A673 (cell line): ENCODE measurements at regions of chr20 and their contacts with region 1.

Region 1: DNA sequence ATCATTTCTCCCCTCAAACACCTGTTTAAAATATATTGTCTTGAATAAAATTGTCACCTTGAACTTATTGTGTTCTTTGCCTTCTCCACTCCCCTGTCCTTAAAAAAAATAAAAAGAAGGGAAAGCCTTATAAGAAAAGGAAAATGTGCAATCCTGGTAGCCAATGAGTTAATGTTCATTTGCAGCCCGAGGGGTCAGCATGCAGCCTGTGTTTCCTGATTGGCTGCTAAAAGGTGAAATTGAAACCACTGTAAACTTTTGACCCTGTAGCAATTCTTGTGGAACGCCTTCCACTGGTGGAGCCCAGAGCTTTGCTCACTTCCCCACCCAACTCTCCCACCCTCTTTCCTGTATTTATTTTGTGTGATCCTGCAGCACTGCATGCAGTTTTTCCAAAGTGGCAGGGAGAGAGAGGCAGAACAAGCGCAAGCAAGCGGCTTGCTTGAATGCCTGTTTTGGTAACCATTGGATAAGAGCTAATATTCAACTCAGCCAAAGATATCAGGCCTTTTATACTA is 74.9 kb downstream of the NCOA3 start:
- DNase-seq: peak; percentile 78
- H3K4me3 ChIP-seq: peak overlapping the region; percentile 9
- H3K27ac ChIP-seq: peak overlapping the region; percentile 0
- H3K4me1 ChIP-seq: peaks cover 54% of the 10 kb centered on the region
- H3K27me3 ChIP-seq: no peaks in the 10 kb centered on the region
- CTCF ChIP-seq: no peak

Region 2: DNA sequence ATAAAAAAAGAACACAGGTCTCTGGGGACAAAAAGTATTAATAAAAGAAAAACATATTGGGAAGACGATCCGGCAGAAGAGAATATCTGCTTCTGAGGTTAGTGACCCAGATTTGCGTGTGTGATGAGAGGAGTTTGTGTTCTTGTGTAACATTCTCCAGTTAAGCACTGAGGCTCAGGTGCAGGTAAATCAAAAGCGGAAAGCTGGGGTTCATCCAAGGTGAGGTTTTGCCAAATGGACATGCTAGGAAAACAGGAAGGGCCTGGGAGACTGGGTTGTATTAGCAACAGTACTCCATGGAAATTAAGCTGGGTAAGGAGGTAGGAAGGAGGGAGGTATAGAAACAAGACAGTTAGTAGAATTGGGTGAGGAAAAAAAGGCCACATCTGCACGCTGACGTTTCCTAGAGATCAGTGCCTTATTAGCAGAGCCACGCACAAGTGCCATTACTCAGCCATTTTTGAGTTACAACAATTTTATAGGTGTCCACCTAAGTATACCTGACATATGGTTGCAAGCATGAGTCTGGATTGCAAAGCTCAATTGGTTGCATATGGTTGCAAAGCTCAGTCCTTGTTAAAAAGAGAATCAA is 359.7 kb before region 1 on chr20:
- CTCF ChIA-PET with region 1: no interaction called
- POLR2A ChIA-PET with region 1: no interaction called
- intact Hi-C with region 1: no loop called
- DNase-seq: no peak
- H3K4me3 ChIP-seq: no peak overlapping the region
- H3K27ac ChIP-seq: no peak overlapping the region
- H3K4me1 ChIP-seq: no peaks in the 10 kb centered on the region
- H3K27me3 ChIP-seq: no peaks in the 10 kb centered on the region
- CTCF ChIP-seq: no peak

Region 3: DNA sequence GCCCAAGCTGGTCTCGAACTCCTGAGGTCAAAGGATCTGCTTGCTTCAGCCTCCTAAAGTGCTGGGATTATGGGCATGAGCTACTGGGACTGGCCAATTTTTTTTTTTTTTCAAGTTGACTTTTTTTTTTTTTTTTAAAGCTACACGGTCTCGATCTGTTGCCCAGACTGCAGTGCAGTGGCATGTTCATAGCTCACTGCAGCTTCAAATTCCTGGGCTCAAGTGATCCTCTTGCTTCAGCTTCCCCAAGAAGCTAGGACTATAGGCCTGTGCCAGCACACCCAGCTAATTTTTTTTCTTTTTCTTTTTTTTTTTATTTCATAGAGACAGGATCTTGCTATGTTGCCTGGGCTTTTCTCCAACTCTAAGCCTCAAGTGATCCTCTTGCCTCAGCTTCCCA is 15.4 kb before region 1 on chr20:
- CTCF ChIA-PET with region 1: no interaction called
- POLR2A ChIA-PET with region 1: interaction called, 12 read pairs
- intact Hi-C with region 1: no loop called
- DNase-seq: no peak
- H3K4me3 ChIP-seq: no peak overlapping the region
- H3K27ac ChIP-seq: no peak overlapping the region
- H3K4me1 ChIP-seq: peaks cover 37% of the 10 kb centered on the region
- H3K27me3 ChIP-seq: no peaks in the 10 kb centered on the region
- CTCF ChIP-seq: no peak

Region 4: DNA sequence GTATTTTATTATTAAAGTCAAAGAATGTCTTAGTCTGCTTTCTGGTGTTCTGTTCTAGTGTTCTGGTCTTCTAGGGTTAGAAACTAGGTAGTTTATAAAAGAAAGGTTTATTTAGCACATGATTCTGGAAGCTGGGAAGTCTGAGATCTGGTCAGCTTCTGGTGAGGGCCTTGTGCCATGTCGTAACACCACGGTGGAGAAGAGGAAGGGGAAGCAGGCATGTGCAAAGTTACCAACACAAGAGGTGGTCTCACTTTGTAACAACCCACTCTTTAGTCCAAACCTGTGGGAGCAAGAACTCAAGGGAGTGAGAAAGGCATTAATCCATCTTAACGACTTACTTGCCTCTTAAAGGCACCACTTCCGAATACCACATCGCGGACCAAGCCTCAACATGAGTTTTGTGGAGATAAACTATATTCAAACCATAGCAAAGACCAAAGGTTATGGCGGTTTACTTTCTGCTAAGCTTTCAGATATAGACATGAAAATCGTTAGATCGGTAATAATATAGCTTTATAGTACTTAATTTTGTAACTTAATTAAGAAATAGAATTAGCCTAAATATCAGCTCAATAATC is 24.5 kb after region 1 on chr20:
- CTCF ChIA-PET with region 1: no interaction called
- POLR2A ChIA-PET with region 1: interaction called, 13 read pairs
- intact Hi-C with region 1: no loop called
- DNase-seq: no peak
- H3K4me3 ChIP-seq: no peak overlapping the region
- H3K27ac ChIP-seq: no peak overlapping the region
- H3K4me1 ChIP-seq: peaks cover 35% of the 10 kb centered on the region
- H3K27me3 ChIP-seq: no peaks in the 10 kb centered on the region
- CTCF ChIP-seq: no peak

Region 5: DNA sequence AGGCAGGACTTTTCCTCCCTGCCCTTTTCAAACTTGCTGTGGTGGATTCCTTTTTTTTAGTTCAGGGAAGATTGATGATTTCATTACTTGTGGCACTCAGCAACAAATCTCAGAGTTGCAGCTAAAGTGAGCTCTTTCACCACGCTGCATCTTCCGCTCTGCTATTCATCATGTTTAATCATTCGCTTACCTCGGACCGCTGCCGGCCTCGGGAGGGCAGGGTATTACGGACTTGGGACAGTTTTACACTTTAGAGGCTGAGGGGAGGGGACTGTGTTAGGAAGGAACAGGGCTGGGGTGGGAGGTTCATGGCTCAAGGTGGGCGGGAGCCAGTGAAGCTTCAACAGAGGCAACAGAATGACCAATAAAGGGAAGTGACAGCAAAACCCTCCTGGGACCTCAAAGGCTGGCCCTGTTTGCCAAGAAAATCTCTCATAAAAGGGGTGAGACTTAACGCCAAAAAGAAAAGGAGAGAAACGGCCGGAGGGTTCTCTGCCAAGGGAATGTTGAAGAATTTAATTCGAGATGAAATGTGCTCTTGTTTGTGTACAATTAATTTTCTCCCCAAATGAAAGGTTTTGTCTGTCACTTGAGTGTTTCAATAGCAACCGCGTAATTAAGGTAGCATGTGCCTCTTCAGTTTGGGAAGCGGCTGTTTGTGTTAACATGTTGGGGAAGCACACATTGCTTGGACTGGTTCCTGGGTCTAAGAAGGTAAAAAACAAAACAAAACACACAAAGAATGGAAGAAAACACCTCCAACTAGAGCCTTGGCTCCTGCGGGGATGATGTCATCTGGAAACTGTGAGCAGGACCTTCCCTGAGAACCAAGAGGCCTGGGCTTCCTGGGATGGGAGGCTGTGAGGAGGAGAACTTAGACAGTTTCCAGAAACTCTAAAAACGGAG is 281.2 kb after region 1 on chr20:
- CTCF ChIA-PET with region 1: no interaction called
- POLR2A ChIA-PET with region 1: no interaction called
- intact Hi-C with region 1: no loop called
- DNase-seq: no peak
- H3K4me3 ChIP-seq: no peak overlapping the region
- H3K27ac ChIP-seq: no peak overlapping the region
- H3K4me1 ChIP-seq: no peaks in the 10 kb centered on the region
- H3K27me3 ChIP-seq: peaks cover 7% of the 10 kb centered on the region
- CTCF ChIP-seq: no peak

Region 6: DNA sequence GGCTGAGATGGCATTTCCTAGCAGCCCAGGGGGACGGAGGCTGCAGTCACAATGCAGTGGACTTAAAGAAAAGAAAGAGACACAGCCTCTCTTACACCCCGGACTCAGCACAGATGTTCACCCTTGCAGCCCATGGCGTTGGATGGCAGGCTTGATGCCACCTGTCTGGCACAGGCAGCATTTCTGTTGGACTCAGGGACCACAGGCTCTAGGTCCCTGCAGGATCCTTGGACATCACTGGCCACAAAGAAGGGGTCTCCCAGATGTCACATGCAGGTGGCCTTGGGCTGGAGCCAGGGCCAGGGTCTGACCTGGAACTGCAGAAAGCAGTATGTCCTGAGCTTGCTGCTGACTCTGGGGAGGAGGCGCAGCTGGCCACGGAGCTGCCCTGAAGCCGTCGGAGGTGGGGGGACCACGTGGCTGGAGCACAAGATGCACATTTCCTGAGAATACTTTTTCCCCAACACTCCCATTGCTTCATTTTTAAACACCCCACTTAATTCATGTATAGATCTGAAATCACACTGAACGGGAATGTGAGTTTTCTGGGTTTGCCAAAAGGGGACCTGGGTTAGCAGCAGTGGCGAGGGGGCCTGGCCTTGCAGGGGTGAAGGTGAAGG is 311.0 kb after region 1 on chr20:
- CTCF ChIA-PET with region 1: no interaction called
- POLR2A ChIA-PET with region 1: no interaction called
- intact Hi-C with region 1: no loop called
- DNase-seq: no peak
- H3K4me3 ChIP-seq: no peak overlapping the region
- H3K27ac ChIP-seq: no peak overlapping the region
- H3K4me1 ChIP-seq: no peaks in the 10 kb centered on the region
- H3K27me3 ChIP-seq: peaks cover 13% of the 10 kb centered on the region
- CTCF ChIP-seq: no peak